Colonic mucosa (tissue), 4 donors: ENCODE measurements at regions of chr1 and their contacts with region 1.

Region 1: DNA sequence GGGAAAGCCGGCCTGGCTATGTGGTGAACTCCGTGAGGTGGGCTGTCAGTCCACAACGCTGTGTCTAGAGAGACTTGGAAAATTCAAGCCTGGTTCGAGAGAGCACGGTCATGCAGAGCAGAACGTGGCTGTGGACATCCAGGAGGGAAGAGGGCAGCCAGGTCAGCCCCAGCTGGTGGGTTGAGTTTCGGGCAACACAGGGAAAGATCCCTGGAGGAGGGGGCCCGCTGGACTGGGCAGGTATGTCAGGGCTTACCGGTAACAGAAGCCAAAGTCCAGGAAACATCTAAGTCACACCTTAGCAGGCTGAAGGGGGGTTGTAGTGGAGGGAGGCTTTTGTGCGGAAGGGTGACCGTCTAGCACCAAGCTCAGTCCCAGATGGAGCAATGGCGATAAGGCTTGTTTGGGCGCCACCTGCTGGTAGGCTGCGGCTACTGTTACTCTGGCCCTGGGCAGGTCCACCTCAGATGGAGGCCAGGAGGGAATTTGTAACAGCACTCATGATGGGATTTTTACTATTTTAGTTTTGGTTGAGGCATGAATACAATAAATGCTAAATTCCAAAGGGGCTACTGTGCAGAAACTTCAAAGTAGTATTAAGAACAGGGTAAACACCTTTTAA is 143.3 kb upstream of the ZNF644 start:
- DNase-seq: peak; percentile 85
- H3K4me3 ChIP-seq: no peak overlapping the region
- H3K27ac ChIP-seq: no peak overlapping the region
- H3K4me1 ChIP-seq: no peaks in the 10 kb centered on the region
- H3K27me3 ChIP-seq: no peaks in the 10 kb centered on the region
- CTCF ChIP-seq: peak; percentile 96

Region 2: DNA sequence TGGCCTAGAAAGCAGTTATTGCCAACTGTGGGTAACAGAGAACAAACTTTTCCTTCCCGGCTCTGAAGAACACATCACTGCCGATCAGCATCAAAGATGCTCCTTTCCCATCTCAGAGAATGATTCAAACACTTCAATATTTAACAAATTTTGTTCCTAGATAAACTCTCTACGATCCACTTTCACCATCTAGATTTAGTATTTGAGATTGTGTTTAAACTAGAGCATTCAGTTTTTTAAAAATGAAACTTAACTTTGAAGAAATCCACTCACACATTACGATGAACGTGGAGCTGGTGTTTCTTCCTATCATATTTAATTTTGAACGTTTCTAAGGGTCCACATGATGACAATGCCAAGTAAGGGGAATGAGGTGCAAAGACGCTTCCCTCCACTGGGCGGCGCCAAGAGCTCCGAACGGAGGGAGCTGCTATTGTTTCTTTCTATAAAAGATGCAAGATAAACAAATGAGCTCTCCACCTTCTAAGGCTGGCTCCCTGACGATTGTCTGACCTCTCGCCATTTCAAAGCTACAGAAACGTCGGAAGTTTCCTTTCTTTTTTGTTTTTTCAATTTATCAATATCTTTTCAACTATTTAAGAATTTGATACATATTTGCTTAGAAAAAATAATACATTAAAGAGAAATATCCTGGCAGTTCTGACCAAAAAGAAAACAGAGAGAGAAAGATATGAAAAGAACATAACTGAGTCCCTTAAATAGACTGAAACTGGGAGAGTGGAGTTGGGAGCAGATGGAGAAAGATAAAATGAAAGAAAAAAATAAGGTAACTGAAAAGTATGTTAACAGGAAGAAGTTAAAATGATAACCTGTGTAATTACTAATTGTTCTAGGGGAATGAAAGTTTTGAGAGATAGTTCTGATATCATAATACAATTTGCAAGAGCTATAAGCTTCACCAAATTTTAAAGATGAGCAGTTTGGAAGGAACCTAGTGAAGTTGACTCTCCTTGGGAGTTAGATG is 443.6 kb before region 1 on chr1:
- intact Hi-C with region 1: loop called (anchors 10 kb)
- DNase-seq: peak; percentile 62
- H3K4me3 ChIP-seq: no peak overlapping the region
- H3K27ac ChIP-seq: no peak overlapping the region
- H3K4me1 ChIP-seq: peaks cover 5% of the 10 kb centered on the region
- H3K27me3 ChIP-seq: peaks cover 92% of the 10 kb centered on the region
- CTCF ChIP-seq: peak; percentile 67

Region 3: GRCh38 chr1:90850898-90851710 is 314.0 kb before region 1 on chr1:
- intact Hi-C with region 1: no loop called
- DNase-seq: peak; percentile 82
- H3K4me3 ChIP-seq: peak overlapping the region; percentile 71
- H3K27ac ChIP-seq: no peak overlapping the region
- H3K4me1 ChIP-seq: no peaks in the 10 kb centered on the region
- H3K27me3 ChIP-seq: no peaks in the 10 kb centered on the region
- CTCF ChIP-seq: peak; percentile 86

Region 4: GRCh38 chr1:90964444-90965035 is 200.6 kb before region 1 on chr1:
- intact Hi-C with region 1: loop called (anchors 10 kb)
- DNase-seq: no peak
- H3K4me3 ChIP-seq: no peak overlapping the region
- H3K27ac ChIP-seq: no peak overlapping the region
- H3K4me1 ChIP-seq: no peaks in the 10 kb centered on the region
- H3K27me3 ChIP-seq: no peaks in the 10 kb centered on the region
- CTCF ChIP-seq: no peak

Region 5: GRCh38 chr1:90996742-90997413 is 168.3 kb before region 1 on chr1:
- intact Hi-C with region 1: no loop called
- DNase-seq: no peak
- H3K4me3 ChIP-seq: no peak overlapping the region
- H3K27ac ChIP-seq: no peak overlapping the region
- H3K4me1 ChIP-seq: no peaks in the 10 kb centered on the region
- H3K27me3 ChIP-seq: no peaks in the 10 kb centered on the region
- CTCF ChIP-seq: no peak

Region 6: DNA sequence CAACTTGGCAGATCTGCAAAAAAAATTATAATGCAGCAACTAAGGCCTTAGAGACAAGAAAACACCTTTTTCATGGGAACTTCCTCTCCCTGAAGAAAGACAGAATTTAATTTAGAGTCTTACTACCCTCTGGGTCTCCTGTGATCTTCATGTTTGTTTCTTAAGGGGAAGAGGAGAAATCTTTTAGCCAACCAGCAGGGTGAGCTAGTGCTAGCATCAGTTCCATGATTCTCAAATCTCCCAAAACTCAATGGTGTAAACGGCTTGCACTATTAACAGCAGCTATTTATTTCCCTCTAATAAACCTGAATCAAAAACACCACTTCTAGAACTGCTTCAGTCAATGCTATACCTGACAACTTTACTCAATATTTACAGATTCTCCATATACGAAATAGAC is 147.1 kb before region 1 on chr1:
- intact Hi-C with region 1: loop called (anchors 10 kb)
- DNase-seq: no peak
- H3K4me3 ChIP-seq: no peak overlapping the region
- H3K27ac ChIP-seq: no peak overlapping the region
- H3K4me1 ChIP-seq: peaks cover 16% of the 10 kb centered on the region
- H3K27me3 ChIP-seq: no peaks in the 10 kb centered on the region
- CTCF ChIP-seq: peak; percentile 22

Region 7: GRCh38 chr1:91282695-91283420 is 117.7 kb after region 1 on chr1:
- intact Hi-C with region 1: loop called (anchors 5 kb)
- DNase-seq: peak; percentile 55
- H3K4me3 ChIP-seq: no peak overlapping the region
- H3K27ac ChIP-seq: no peak overlapping the region
- H3K4me1 ChIP-seq: no peaks in the 10 kb centered on the region
- H3K27me3 ChIP-seq: no peaks in the 10 kb centered on the region
- CTCF ChIP-seq: peak; percentile 68